ENCODE measurements at regions of chr12 and their contacts with region 1.

Region 1: GRCh38 chr12:94074980-94075928 is 73.1 kb upstream of the PLXNC1 start:
- DNase-seq: peak; percentile 81
- ATAC-seq: peak; percentile 92

Region 2: GRCh38 chr12:93813972-93814821 is 261.1 kb before region 1 on chr12:
- intact Hi-C with region 1: loop called (anchors 1 kb)
- DNase-seq: peak; percentile 86
- ATAC-seq: peak; percentile 92

Region 3: DNA sequence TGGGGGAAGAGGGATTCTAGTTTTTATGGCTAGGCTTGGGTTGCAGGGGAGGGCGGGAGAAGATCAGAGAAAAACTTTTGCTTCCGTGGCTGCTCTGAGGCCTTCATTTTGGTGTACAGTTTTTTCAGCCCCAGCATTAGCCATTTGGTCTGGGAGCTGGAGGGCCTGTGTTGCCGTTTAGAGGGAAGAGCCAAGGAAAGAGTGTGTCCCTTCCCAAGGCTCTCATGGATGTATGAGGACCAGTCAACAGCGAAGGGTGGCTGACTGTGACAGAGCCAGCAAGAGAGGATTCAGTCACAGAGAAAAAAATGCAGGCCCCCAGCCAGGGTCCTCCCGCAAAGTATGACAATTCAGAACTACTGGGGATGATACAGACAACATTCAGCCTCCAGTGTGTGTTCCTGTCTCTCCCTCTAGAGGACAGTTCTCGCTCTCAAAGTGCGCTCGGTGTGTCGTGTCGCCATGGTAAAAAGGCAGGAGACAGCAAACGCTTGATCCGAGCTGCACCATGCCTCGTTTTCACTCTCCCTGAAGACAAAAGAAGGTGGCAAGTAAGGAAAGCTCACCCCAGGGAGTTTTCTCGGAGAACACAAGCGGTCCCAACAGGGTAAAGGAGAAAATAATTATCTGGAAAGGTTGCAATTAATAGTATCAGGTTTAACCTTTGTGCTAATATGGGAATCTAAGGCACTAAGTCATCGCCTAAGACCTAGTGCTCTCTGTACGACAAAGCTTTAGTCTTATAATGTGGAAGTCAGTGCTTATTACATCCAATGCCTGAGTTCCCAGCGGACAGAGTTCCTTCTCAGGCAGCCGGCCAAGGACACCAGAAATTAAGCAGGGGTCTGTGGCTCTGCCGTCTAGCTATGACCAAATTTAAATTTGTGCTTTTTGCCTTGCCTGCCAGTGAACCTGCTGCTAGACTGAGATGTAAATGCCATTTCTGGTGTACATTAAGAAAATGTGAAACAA is 84.1 kb before region 1 on chr12:
- intact Hi-C with region 1: loop called (anchors 5 kb)
- DNase-seq: no peak
- ATAC-seq: peak; percentile 93

Measured in Right ventricle myocardium inferior (tissue), 1 donor.